ENCODE measurements at regions of chr18 and their contacts with region 1.

Region 1: DNA sequence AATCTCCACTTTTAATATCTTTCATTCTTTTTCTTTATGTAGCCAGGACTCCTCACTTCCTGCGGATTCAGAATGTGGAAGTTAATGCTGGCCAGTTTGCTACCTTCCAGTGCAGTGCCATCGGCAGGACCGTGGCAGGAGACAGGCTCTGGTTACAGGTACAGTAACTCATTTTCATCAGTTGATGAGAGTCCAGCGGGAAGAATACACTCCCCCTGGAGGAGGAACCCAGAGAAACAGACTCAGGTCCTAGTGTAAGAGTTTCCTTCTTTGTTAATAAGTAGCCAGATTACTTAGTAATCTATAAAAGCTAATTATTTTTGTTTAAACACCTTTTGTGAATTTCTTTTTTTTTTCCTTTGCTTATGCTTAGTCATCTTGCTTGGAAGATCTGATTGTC is 359.4 kb downstream of the PTPRM start:
- DNase-seq: peak; percentile 78
- H3K4me3 Mint-ChIP-seq: peak overlapping the region; percentile 43
- H3K27ac Mint-ChIP-seq: peak overlapping the region; percentile 86
- H3K4me1 Mint-ChIP-seq: peaks cover 66% of the 10 kb centered on the region
- H3K27me3 Mint-ChIP-seq: no peaks in the 10 kb centered on the region
- CTCF ChIP-seq: peak; percentile 71

Region 2: DNA sequence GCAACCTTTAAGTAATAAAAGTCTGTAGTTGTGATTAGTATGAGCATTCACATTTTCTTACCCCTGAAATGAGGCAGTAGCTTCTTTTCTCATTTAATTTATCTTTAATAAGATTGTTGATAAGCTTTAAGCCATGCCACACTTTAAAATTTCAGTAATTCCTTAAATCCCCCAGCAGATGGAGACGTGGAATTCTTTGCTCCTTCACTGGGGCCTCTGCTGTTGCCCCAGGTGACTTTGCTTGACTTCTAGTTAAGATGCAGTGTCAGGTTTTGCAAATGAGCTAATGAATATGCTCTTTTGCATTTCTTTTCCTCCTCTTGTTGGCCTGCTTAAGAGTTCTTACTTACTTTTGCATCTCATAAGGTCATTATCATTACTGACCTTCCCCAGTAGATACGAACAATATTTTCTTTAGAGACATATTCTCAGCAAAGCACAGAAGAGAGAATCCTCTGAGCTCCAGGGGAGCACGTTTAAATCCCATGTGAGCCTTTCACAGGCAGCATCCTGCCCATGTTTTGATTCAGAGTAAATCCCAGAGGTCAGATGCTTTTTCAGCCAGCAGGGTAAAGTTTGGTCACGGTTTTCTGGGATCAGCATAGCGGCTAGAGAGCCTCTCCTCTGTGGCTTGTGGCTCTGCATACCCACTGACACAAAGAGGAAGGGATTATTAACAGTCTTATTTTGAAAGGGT is 136.5 kb before region 1 on chr18:
- CTCF ChIA-PET with region 1: interaction called, 10 read pairs
- intact Hi-C with region 1: loop called (anchors 1 kb)
- DNase-seq: peak; percentile 49
- H3K4me3 Mint-ChIP-seq: no peak overlapping the region
- H3K27ac Mint-ChIP-seq: no peak overlapping the region
- H3K4me1 Mint-ChIP-seq: no peaks in the 10 kb centered on the region
- H3K27me3 Mint-ChIP-seq: no peaks in the 10 kb centered on the region
- CTCF ChIP-seq: peak; percentile 63

Region 3: GRCh38 chr18:7872569-7872968 is 54.0 kb before region 1 on chr18:
- CTCF ChIA-PET with region 1: interaction called, 4 read pairs
- intact Hi-C with region 1: loop called (anchors 1 kb)
- DNase-seq: peak; percentile 37
- H3K4me3 Mint-ChIP-seq: peak overlapping the region; percentile 26
- H3K27ac Mint-ChIP-seq: peak overlapping the region; percentile 85
- H3K4me1 Mint-ChIP-seq: peaks cover 27% of the 10 kb centered on the region
- H3K27me3 Mint-ChIP-seq: no peaks in the 10 kb centered on the region
- CTCF ChIP-seq: no peak

Region 4: GRCh38 chr18:7941533-7941932 is 15.0 kb after region 1 on chr18:
- CTCF ChIA-PET with region 1: interaction called, 11 read pairs
- intact Hi-C with region 1: no loop called
- DNase-seq: peak; percentile 74
- H3K4me3 Mint-ChIP-seq: no peak overlapping the region
- H3K27ac Mint-ChIP-seq: peak overlapping the region; percentile 86
- H3K4me1 Mint-ChIP-seq: peaks cover 69% of the 10 kb centered on the region
- H3K27me3 Mint-ChIP-seq: no peaks in the 10 kb centered on the region
- CTCF ChIP-seq: no peak

Region 5: DNA sequence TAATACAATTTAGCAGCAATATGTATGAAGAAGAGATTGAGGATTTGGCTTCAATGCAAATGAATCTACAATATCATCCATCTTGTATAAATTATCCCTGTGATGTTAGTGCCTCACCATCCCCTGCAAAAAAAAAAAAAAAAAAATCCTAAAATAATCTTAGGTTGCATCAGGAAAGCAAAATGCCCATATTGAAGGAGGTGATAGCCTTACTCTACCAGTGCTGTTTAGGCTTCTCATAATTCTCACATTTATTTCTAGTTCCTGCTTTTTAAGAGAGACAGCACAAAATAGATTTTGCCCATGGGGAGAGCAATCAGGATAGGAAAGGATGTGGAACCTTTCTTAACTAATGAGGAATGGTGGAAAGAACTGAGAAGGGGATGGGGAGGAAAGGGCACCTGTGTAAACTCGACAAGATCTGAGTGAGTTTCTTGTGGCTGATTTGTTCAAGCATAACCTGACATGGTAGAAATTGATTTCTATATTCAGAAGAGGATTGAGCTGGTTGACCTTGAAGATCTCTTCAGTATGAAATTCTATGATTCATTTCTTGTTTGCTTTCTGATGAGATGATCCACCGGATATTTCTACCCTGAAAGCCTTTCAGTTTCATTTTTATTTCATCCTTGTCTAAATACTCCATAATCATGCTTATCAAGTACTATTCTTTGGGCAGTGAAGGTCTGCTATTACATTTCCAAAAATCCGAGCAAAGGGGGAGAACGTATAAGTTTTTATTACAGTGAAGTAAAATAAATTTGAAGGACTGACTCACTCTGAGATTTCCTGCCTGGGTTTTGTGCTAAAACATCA is 31.8 kb after region 1 on chr18:
- CTCF ChIA-PET with region 1: no interaction called
- intact Hi-C with region 1: no loop called
- DNase-seq: no peak
- H3K4me3 Mint-ChIP-seq: peak overlapping the region; percentile 51
- H3K27ac Mint-ChIP-seq: peak overlapping the region; percentile 68
- H3K4me1 Mint-ChIP-seq: peaks cover 40% of the 10 kb centered on the region
- H3K27me3 Mint-ChIP-seq: no peaks in the 10 kb centered on the region
- CTCF ChIP-seq: no peak

Region 6: GRCh38 chr18:8107426-8107825 is 180.9 kb after region 1 on chr18:
- CTCF ChIA-PET with region 1: no interaction called
- intact Hi-C with region 1: no loop called
- DNase-seq: no peak
- H3K4me3 Mint-ChIP-seq: no peak overlapping the region
- H3K27ac Mint-ChIP-seq: no peak overlapping the region
- H3K4me1 Mint-ChIP-seq: no peaks in the 10 kb centered on the region
- H3K27me3 Mint-ChIP-seq: no peaks in the 10 kb centered on the region
- CTCF ChIP-seq: no peak

Measured in Calu3 (cell line).